Right ventricle myocardium inferior (tissue), 1 donor: ENCODE measurements at regions of chr3 and their contacts with region 1.

Region 1: GRCh38 chr3:15427182-15427880 is at the starts of genes EAF1 and METTL6:
- DNase-seq: peak; percentile 93
- ATAC-seq: peak; percentile 89
- total RNA-seq, gene EAF1: 6.7 TPM
- total RNA-seq, gene METTL6: 6.8 TPM

Region 2: DNA sequence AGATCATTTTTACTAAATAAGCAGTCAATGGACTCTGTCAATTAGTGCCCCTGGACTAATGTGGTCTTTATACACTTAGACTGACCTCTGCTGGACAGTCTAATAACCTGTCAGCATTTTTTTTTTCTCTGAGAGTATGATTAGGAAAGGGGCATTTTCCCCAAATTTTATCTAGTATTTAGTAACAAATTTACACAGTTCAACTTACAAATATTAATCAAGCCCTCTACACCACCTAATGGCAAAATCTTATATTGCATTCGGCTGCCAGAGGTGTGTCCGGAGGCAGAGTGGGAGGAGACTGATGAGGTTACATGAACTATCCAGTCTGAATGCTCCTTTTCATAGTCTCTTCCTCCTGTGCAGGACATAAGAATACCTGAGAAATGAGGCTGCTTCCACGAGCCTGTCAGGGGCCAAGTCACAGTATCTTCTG is 130.2 kb after region 1 on chr3:
- intact Hi-C with region 1: loop called (anchors 2 kb)
- DNase-seq: no peak
- ATAC-seq: peak; percentile 65